A549 (cell line): ENCODE measurements at regions of chr19 and their contacts with region 1.

Region 1: DNA sequence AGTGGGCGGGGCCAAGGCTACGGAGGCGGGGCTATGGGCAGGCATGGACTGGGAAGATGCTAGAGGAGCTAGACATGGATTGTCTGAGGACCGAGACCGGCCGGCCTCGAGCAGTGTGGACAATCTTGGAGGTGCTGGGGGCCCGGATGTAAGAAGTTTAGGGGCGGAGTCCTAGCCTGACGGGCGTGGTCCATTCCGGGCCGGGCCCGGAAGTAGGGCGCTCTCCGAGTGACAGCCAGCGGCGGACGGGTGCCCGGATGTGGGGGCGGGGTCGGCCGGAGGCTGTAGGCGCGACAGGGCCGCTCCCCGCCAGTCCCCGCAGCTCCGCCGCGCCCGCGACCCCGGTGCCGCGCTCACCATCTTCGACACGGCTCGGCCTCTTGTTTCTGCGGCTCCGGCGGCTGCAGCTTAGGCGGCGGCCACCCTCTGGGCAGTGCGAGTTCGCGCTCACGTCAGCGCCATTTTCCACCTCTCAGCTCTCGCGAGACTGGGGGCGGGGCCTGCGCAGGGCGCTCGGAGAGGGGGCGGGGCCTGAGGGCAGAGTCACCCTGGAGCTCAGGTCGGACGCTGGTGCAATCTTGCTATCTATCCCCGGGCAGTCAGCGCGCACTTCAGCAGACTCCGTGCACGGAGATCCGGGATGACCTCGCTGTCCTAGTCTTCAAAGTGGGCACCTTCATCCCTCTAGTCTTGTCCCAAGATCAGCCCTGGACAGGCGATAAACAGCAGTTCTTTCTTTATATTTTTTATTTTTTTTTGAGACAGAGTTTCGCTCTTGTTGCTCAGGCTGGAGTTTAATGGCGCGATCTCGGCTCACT is at the start of gene ZNF414:
- DNase-seq: peak; percentile 92 to 97
- ATAC-seq: peak; percentile 95
- H3K4me3 ChIP-seq: peak within 1 kb of the TSS; percentile 51
- H3K27ac ChIP-seq: peak within 1 kb of the TSS; percentile 94 to 99
- H3K4me1 ChIP-seq: peaks cover 18% of the 10 kb centered on the region
- CTCF ChIP-seq: no peak
- EP300 ChIP-seq: no peak
- POLR2A ChIP-seq: peak; percentile 92
- RAD21 ChIP-seq: no peak
- polyA plus RNA-seq, gene ZNF414: 2.8 and 3.3 TPM in 2 replicates

Region 2: DNA sequence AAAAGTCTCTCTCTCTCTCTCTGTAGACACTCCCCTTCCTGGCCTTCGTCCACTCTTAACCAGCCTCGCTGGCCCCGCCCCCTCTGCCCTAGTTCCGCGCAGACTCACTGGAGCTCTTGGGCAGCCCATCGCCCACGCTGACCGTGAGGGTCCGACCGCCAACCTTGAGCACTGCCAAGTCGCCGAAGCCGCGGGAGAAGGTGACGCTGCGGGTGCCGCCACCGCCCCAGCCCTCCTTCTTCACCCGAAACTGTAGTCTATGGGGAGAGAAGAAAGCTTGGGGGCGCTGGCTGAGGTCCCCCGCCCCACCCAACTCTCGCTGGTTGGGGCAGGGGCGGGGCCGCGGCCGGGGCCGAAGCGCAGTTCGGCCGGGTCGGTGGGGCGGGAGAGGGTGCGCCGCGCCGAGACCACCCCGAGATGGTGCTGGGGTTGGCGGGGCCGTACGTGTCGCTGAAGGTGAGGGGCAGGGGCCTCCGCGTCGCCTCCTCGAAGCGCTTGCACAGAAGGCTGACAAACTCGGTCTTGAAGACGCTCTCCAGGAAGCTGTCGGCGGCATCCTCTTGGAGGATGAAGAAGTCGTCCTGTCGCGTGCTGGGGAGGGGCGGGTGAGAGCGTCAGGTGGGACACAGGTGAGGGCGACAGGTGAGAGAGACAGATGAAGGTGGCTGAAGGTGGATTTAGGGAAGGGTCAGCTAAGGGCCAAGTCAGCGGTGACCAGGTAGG is 12.6 kb after region 1 on chr19:
- CTCF ChIA-PET with region 1: interaction called, 14 read pairs
- POLR2A ChIA-PET with region 1: interaction called, 39 read pairs
- DNase-seq: peak; percentile 67 to 86
- ATAC-seq: peak; percentile 83 to 86
- H3K4me3 ChIP-seq: peak overlapping the region; percentile 69
- H3K27ac ChIP-seq: peak overlapping the region; percentile 76 to 92
- H3K4me1 ChIP-seq: peaks cover 4% of the 10 kb centered on the region; the same call in 1 of the 3 replicates
- CTCF ChIP-seq: no peak
- EP300 ChIP-seq: no peak
- POLR2A ChIP-seq: peak; percentile 85
- RAD21 ChIP-seq: no peak